ENCODE measurements at regions of chr19 and their contacts with region 1.

Region 1: GRCh38 chr19:49309087-49309486 is 15.9 kb downstream of the SLC6A16 start:
- DNase-seq: no peak
- H3K4me3 Mint-ChIP-seq: no peak overlapping the region
- H3K27ac Mint-ChIP-seq: no peak overlapping the region
- H3K4me1 Mint-ChIP-seq: no peaks in the 10 kb centered on the region
- H3K27me3 Mint-ChIP-seq: no peaks in the 10 kb centered on the region
- CTCF ChIP-seq: no peak

Region 2: GRCh38 chr19:49097455-49098288 is 211.4 kb before region 1 on chr19:
- CTCF ChIA-PET with region 1: no interaction called
- POLR2A ChIA-PET with region 1: no interaction called
- intact Hi-C with region 1: no loop called
- DNase-seq: peak; percentile 87
- H3K4me3 Mint-ChIP-seq: no peak overlapping the region
- H3K27ac Mint-ChIP-seq: no peak overlapping the region
- H3K4me1 Mint-ChIP-seq: peaks cover 5% of the 10 kb centered on the region
- H3K27me3 Mint-ChIP-seq: no peaks in the 10 kb centered on the region
- CTCF ChIP-seq: peak; percentile 96

Region 3: DNA sequence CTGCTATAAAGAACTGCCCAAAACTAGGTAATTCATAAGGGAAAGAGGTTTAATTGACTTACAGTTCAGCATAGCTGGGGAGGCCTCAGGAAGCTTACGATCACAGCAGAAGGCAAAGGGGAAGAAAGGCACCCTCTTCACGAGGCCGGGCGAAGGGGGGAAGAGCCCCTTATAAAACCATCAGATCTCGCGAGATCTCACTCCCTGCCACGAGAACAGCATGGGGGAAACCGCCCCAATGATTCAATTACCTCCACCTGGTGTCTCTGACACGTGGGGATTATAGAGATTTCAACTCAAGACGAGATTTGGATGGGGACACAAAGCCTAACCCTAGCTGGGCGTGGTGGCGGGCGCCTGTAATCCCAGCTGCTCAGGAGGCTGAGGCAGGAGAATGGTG is 26.9 kb before region 1 on chr19:
- CTCF ChIA-PET with region 1: interaction called, 10 read pairs
- POLR2A ChIA-PET with region 1: no interaction called
- intact Hi-C with region 1: no loop called
- DNase-seq: no peak
- H3K4me3 Mint-ChIP-seq: no peak overlapping the region
- H3K27ac Mint-ChIP-seq: no peak overlapping the region
- H3K4me1 Mint-ChIP-seq: no peaks in the 10 kb centered on the region
- H3K27me3 Mint-ChIP-seq: no peaks in the 10 kb centered on the region
- CTCF ChIP-seq: no peak

Region 4: GRCh38 chr19:49387936-49388372 is 78.9 kb after region 1 on chr19 and contains the start of gene KASH5:
- CTCF ChIA-PET with region 1: no interaction called
- POLR2A ChIA-PET with region 1: no interaction called
- intact Hi-C with region 1: no loop called
- DNase-seq: no peak
- H3K4me3 Mint-ChIP-seq: no peak within 1 kb of the TSS
- H3K27ac Mint-ChIP-seq: no peak within 1 kb of the TSS
- H3K4me1 Mint-ChIP-seq: peaks cover 6% of the 10 kb centered on the region
- H3K27me3 Mint-ChIP-seq: peaks cover 23% of the 10 kb centered on the region
- CTCF ChIP-seq: no peak
- total RNA-seq, gene KASH5: not detected in 2 replicates